Dorsolateral prefrontal cortex (tissue), 120 donors: ENCODE measurements at regions of chr17 and their contacts with region 1.

Region 1: GRCh38 chr17:39636927-39637736 is at the start of gene STARD3:
- DNase-seq: peak; percentile 82 to 95 (median 92)
- H3K4me3 ChIP-seq: peak within 1 kb of the TSS; percentile 39 to 96 (median 87)
- H3K27ac ChIP-seq: peak within 1 kb of the TSS; percentile 64 to 97 (median 91)
- H3K27me3 ChIP-seq: no peaks in the 10 kb centered on the region
- CTCF ChIP-seq: peak in 52 of 56 donors; percentile 15 to 75 (median 50)
- total RNA-seq, gene STARD3: 45.7 to 129 (median 71.4) TPM

Region 2: DNA sequence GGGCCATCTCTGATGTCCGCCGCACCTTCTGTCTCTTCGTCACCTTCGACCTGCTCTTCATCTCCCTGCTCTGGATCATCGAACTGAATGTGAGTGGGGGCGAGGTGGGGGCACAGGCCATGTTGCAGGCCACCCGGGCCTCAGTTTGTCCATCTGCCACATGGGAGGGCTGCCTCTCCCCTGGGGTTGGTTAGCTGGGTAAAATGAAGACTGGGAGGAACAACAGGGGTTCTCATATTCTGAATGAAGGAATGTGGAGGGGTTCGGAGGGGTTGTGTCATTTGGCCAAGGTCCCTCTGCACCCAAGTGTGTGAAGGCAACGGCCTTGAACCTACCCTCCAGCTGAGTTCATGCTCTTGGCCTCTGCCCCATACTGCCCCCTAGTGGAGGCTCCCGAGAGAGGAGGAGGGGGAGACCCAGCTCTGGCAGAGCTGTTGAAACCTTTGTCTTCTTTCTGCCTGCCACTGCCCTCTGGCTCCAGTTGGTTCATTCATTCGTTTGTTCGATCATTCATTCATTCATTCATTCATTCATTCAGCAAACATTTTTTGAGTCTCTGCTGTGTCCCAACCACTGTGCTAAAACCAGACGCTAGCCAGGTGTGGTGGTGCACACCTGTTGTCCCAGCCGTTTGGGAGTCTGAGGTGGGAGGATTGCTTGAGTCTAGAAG is 16.7 kb after region 1 on chr17:
- intact Hi-C with region 1: loop called in 1 of 2 experiments (anchors 1 kb)
- DNase-seq: peak in 8 of 10 donors; percentile 40 to 76 (median 65)
- H3K4me3 ChIP-seq: peak overlapping the region in 33 of 59 donors; percentile 1 to 44 (median 21)
- H3K27ac ChIP-seq: peak overlapping the region; percentile 79 to 99 (median 94)
- H3K27me3 ChIP-seq: no peaks in the 10 kb centered on the region
- CTCF ChIP-seq: peak; percentile 45 to 87 (median 74)

Region 3: GRCh38 chr17:39730095-39730921 is 93.2 kb after region 1 on chr17 and contains the start of gene MIEN1:
- intact Hi-C with region 1: loop called (anchors 5 kb)
- DNase-seq: peak; percentile 88 to 97 (median 92)
- H3K4me3 ChIP-seq: peak within 1 kb of the TSS; percentile 70 to 100 (median 92)
- H3K27ac ChIP-seq: peak within 1 kb of the TSS in 57 of 59 donors; percentile 44 to 95 (median 84)
- H3K27me3 ChIP-seq: no peaks in the 10 kb centered on the region
- CTCF ChIP-seq: peak; percentile 73 to 98 (median 93)
- total RNA-seq, gene MIEN1: 37.4 to 67.6 (median 52.1) TPM